Breast epithelium (tissue), 4 donors: ENCODE measurements at regions of chr17 and their contacts with region 1.

Region 1: DNA sequence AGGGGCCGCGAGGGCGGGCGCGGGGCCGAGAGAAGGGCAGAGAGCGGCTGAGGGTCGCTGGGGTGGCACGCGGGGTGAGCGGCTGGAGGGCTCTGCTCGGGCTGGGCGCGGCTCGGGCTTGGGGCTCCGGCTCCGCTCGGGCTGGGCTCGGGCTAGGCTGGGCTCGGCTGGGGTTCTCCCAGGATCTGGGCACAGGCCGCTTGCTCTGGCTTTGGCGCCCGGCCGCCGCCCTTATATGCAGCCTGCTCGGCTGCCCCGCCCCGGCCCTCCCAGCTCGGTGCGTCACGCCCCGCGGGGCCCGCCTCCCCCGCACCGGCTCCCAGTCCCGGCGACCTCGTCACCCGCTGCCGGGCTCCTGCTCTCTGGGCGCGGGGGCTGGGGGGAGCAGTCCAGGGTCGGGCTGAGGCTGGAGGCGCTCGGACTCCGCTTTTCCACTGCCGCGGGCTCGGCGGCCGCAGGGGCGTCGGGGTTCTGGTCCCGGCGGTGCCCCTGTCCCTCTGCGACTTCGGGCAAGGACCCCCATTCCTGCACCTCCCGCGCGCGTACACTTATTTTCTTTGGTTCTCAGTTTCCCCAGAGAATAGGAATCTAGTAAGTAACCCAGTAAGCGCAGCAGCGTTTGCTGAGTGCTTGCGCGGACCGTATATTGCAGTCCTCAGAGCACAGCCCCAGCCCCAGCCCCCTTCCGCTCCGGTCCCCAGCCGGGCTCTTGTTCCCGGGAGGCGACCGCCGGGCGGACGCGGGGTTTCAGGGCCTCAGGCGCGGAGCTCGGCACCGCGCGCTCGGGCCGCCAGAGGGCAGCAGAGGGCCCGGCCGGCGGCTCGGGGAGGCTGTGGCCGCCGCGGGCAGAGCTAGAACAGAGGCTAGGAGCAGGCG is at the start of gene RASD1:
- DNase-seq: peak; percentile 87 to 96
- H3K4me3 ChIP-seq: peak within 1 kb of the TSS; percentile 65 to 77 (median 70)
- H3K27ac ChIP-seq: peak within 1 kb of the TSS; percentile 80 to 83
- H3K4me1 ChIP-seq: no peaks in the 10 kb centered on the region
- H3K27me3 ChIP-seq: no peaks in the 10 kb centered on the region
- CTCF ChIP-seq: peak; percentile 58 to 94 (median 70)
- POLR2A ChIP-seq: peak; percentile 93
- total RNA-seq, gene RASD1: 64.0 to 140 (median 75.0) TPM

Region 2: DNA sequence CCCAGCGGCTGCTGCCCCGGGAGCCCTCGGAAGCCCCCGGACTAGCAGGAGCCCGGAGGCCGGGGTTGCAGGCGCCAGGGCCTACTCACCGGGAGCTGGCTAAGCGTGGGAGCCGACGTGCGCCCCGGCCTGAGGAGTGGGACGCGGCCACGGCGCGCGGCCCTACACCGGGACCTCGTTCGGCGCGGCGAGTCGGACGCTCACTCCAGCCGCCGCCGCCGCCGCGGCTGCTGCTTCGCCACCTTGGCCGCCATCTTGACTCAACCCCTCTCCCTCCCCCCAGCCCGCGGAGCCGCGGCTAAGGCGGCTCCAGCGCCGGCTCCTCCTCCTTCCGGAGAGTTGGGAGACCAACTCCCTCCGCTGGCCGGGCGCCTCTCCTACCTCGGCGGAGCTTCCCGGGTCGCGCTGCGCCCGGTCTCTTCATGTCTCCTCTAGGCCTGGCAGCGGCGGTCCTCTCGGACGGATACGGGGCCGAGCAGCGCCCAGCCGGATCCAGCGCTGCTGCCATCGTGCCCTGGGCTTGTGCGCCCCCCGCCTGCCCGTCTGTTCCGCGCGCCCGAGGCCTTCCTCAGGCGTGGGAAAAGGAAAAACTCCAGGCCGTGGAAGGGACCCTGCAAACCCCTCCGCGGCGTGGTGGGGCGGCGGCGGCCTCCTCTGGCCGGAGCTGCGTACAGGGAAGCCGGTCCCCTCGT is 1281.0 kb before region 1 on chr17 and contains the start of gene NCOR1:
- intact Hi-C with region 1: loop called (anchors 10 kb)
- DNase-seq: peak; percentile 84 to 90
- H3K4me3 ChIP-seq: peak within 1 kb of the TSS; percentile 91 to 99 (median 98)
- H3K27ac ChIP-seq: peak within 1 kb of the TSS; percentile 96 to 98
- H3K4me1 ChIP-seq: peaks cover 0 to 8% of the 10 kb centered on the region in 2 donors
- H3K27me3 ChIP-seq: no peaks in the 10 kb centered on the region
- CTCF ChIP-seq: peak in 1 of 3 donors; percentile 32
- POLR2A ChIP-seq: peak; percentile 83
- total RNA-seq, gene NCOR1: 118 to 229 (median 174) TPM

Region 3: DNA sequence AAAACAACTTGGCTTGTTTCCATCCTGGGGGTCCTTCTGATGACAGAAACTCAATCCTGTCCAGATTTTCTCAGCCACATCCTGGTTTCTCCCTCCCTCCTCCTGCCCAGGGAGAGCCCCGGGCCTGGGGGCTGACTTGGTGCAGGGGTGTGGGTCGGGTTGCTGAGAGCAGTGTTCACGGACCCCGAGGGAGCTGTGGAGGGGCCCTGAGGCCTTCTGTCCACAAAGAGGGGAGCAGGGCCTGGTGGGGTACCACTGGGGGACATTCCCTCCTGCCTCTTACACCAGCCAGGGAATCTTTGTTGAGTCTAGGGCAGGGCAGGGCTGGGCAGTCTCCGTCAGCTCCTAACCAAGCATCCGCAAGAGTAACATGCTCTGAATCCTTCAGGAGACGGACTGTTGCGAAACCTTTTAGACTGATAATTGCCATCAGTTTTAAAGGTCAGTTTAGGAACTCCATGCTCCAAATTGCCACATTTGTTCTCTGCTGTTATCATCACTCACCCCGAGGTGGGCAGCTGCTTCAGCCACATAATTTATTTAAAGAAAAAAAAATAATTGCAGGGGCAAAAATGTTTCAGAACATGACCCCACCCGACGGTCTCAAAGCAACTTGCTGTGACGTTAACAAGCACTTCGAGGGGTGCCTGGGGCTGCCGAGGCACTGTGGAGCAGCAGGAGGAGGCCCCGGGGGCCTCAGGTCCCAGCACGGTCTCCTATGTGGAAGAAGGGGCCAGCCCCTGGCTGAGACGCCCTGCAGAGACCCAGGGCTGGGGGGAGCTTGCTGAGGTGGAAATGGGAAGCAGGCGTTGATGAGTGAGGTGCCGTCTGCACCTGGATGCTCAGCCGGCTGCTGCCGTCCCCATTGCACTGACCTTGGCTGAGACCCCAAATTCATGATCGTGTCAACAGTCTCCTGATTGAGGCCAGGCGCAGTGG is 147.0 kb before region 1 on chr17:
- intact Hi-C with region 1: loop called (anchors 2 kb)
- DNase-seq: peak in 1 of 2 donors; percentile 28
- H3K4me3 ChIP-seq: no peak overlapping the region
- H3K27ac ChIP-seq: no peak overlapping the region
- H3K4me1 ChIP-seq: peaks cover 0 to 4% of the 10 kb centered on the region in 2 donors
- H3K27me3 ChIP-seq: no peaks in the 10 kb centered on the region
- CTCF ChIP-seq: no peak
- POLR2A ChIP-seq: no peak

Region 4: DNA sequence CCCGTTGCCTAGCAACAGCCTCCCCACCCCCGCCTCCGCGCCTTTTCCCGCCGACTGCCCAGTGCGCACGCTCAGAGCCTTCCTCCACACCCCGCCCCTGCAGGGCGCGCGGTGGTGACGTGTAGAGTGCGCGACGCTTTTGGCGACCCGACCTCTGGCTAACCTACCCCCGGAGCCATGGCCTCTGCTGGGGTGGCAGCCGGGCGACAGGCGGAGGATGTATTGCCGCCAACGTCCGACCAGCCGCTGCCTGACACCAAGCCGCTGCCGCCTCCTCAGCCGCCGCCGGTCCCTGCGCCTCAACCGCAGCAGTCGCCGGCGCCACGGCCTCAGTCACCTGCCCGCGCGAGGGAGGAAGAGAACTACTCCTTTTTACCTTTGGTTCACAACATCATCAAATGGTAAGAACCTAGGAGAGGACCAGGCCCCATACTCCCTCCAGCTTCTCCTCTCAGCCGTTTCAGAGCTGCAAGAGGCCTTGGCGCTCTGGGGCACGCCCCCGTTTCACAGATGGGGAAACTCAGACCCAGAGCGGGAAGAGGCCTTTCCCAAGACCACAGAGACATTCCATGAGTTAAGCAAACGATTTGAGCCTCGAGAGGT is 19.5 kb before region 1 on chr17 and contains the start of gene MED9:
- intact Hi-C with region 1: no loop called
- DNase-seq: peak; percentile 87 to 91
- H3K4me3 ChIP-seq: peak within 1 kb of the TSS; percentile 86 to 98 (median 88)
- H3K27ac ChIP-seq: peak within 1 kb of the TSS; percentile 92 to 94
- H3K4me1 ChIP-seq: peaks cover 0 to 14% of the 10 kb centered on the region in 2 donors
- H3K27me3 ChIP-seq: no peaks in the 10 kb centered on the region
- CTCF ChIP-seq: no peak
- POLR2A ChIP-seq: peak; percentile 36
- total RNA-seq, gene MED9: 13.4 to 22.5 (median 20.0) TPM

Region 5: DNA sequence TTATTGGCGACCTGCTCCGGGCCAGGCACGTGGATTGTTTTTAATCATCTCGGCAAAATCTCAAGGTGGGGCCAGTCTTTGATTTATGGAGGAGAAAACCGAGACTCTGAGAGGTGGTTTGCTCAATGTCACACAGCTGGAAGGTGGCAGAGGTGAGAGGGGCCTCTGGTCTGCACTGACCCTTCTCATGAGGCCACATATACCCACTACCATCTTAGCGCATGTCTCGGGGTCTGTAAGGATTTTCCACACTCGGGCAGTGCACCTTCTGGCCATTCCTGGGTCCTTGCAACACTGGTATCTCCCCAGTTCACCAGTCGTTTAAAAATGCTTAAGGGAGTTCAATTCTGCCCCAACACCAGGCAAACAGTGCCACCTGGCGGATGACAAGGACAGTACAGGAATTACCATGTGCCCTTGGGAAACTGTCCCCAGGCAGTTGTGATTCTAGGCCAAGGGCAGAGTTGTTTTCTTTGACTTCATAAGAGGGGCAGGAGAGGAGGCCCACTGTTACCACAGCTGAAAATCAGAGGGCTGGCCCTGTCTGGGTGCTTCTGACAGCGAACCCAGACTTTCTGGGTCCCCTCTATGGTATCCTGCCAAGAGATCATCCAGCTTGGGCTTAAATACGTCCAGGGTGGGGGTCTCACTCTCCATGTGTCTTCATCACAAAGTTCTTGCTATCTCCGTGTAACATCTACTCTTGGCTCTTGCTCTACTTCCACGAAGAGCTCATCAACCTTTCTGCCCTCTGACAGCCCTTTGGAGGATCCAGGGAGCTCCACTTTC is 145.4 kb after region 1 on chr17:
- intact Hi-C with region 1: loop called (anchors 10 kb)
- DNase-seq: peak; percentile 44 to 73
- H3K4me3 ChIP-seq: no peak overlapping the region
- H3K27ac ChIP-seq: no peak overlapping the region
- H3K4me1 ChIP-seq: no peaks in the 10 kb centered on the region
- H3K27me3 ChIP-seq: no peaks in the 10 kb centered on the region
- CTCF ChIP-seq: peak; percentile 92 to 97 (median 97)
- POLR2A ChIP-seq: no peak